IMR-90 (cell line): ENCODE measurements at regions of chr12 and their contacts with region 1.

Region 1: DNA sequence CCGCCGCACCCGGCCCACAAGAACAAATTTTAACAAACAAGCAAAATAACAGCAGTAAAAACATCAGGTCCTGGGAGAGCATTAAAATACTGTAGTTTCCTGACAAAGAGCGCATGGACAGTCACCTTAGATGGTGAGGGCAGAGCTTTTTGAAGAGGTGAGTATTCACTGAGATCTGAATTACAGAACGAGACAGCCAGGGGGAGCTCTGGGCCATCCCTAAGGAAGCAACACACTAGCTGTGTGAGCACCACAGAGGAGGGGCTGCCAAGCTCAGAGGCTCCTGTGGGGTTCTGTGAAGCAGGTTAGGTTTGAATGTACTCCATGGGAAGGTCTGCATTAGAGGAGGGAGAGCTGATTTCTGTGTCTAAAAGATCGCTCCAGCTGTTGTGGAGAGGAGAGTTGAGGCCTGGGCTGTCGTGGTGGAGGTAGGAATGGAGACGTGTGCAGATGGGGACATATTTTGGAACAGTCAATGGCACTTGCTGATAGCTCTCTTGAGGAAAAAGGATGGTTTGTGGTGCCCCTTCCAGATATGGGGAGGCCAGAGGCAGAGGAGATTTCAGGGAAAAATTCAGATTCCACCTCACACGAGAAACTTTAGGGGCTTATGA is 72.9 kb downstream of the TRAFD1 start:
- DNase-seq: peak; percentile 51
- ATAC-seq: peak; percentile 95
- H3K4me3 ChIP-seq: no peak overlapping the region
- H3K27ac ChIP-seq: no peak overlapping the region
- H3K4me1 ChIP-seq: no peaks in the 10 kb centered on the region
- H3K27me3 ChIP-seq: no peaks in the 10 kb centered on the region
- CTCF ChIP-seq: peak; percentile 53
- POLR2A ChIP-seq: no peak
- RAD21 ChIP-seq: peak; percentile 62

Region 2: DNA sequence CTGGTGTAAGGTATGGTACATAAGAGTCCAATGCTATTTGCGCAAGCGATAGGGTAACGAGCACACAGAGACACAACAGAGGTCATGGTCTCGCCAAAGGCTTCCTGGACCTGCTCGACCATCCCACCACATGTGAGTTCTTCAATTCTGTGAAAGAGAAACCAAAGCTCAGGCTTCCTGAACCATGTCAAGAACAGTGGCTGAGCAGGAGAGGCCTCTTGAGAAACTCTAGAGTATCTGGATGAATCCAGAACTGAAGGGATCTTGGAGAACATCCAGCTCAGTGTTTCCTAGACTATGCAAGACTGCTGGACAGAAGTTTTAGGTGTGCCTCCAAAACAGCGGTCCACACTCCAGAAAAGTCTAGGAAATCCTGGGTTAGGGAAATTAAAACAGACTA is 41.7 kb after region 1 on chr12:
- CTCF ChIA-PET with region 1: no interaction called
- POLR2A ChIA-PET with region 1: no interaction called
- dilution Hi-C with region 1: no loop called
- in situ Hi-C with region 1: no loop called
- intact Hi-C with region 1: loop called (anchors 5 kb)
- DNase-seq: no peak
- ATAC-seq: no peak
- H3K4me3 ChIP-seq: no peak overlapping the region
- H3K27ac ChIP-seq: no peak overlapping the region
- H3K4me1 ChIP-seq: no peaks in the 10 kb centered on the region
- H3K27me3 ChIP-seq: no peaks in the 10 kb centered on the region
- CTCF ChIP-seq: no peak
- POLR2A ChIP-seq: no peak
- RAD21 ChIP-seq: no peak

Region 3: DNA sequence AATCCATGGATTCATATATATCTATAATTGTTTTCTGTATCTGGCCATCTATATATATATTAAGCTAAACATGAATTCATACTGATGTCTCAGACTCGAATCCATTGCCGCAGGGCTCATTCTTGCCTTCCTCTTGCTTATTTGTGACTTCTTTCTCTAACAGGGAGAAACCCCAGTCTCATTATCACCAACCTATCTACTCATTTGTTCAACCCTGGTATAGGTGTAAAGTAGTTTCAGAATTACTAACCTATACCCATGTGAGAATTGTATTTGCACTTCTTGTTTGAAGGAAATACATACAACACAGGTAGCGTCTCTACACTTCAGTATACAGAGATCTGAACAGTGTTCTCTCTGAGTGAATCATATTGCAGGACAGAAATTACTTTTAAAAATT is 298.3 kb after region 1 on chr12:
- CTCF ChIA-PET with region 1: no interaction called
- POLR2A ChIA-PET with region 1: no interaction called
- dilution Hi-C with region 1: no loop called
- in situ Hi-C with region 1: no loop called
- intact Hi-C with region 1: no loop called
- DNase-seq: no peak
- ATAC-seq: no peak
- H3K4me3 ChIP-seq: no peak overlapping the region
- H3K27ac ChIP-seq: no peak overlapping the region
- H3K4me1 ChIP-seq: no peaks in the 10 kb centered on the region
- H3K27me3 ChIP-seq: no peaks in the 10 kb centered on the region
- CTCF ChIP-seq: no peak
- POLR2A ChIP-seq: no peak
- RAD21 ChIP-seq: no peak